PC-3 (cell line): ENCODE measurements at regions of chr18 and their contacts with region 1.

Region 1: GRCh38 chr18:57630002-57630753 is 8.5 kb upstream of the NARS1 start:
- DNase-seq: peak; percentile 88
- ATAC-seq: peak; percentile 86
- H3K4me3 ChIP-seq: peak overlapping the region; percentile 71
- H3K27ac ChIP-seq: peak overlapping the region; percentile 63
- H3K4me1 ChIP-seq: peaks cover 14% of the 10 kb centered on the region
- H3K27me3 ChIP-seq: no peaks in the 10 kb centered on the region
- CTCF ChIP-seq: peak; percentile 77

Region 2: GRCh38 chr18:57281519-57281918 is 348.7 kb before region 1 on chr18:
- CTCF ChIA-PET with region 1: no interaction called
- POLR2A ChIA-PET with region 1: no interaction called
- intact Hi-C with region 1: no loop called
- DNase-seq: no peak
- ATAC-seq: no peak
- H3K4me3 ChIP-seq: no peak overlapping the region
- H3K27ac ChIP-seq: no peak overlapping the region
- H3K4me1 ChIP-seq: no peaks in the 10 kb centered on the region
- H3K27me3 ChIP-seq: peaks cover 44% of the 10 kb centered on the region
- CTCF ChIP-seq: no peak

Region 3: DNA sequence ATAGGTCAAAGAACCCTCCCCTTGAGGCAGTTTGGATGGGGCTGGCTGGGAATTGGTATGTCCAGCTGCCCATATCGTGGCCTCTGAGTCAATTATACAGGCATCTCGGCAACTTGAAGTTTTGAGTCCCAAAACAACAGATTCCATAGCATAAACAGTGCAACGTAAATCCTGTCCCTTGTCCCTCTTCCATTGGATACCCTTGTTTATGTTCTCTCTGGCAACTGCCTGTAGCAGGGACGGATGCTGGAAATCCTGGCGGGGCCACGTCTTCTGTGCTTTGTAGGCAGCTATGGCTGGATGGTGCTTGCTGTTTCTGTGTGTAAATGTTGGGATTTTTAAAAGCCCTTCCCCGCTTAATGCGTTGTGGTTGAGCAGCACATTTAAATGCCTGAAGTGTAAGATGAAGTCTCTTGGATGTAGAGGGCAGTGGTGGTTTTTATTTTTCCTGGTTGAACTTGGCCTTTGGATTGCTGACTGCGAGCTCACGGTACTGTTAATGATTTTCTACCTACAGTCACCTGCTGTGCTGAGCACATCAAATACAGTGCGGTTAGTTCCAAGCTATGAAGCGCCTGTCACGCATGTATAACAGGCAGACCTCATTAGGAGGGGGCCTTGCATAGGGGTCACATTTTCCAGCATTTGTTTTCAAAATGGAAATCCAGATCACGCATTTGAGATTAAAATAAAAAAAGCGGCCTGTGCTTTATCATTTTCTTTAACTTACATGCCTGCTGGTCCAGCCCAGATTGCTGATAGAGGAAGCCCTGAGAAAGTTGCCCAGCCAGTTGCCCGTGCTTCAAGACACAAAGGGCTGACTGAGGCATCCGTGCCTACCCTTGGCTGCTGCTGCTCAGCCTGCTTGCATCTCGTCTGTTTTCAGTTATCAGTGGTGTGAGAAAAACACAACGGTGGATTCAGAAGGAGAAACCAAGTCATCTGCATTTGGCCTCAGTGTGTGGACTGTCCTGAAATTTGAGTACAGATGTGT is 498.5 kb after region 1 on chr18:
- CTCF ChIA-PET with region 1: no interaction called
- POLR2A ChIA-PET with region 1: interaction called, 8 read pairs
- intact Hi-C with region 1: loop called (anchors 10 kb)
- DNase-seq: no peak
- ATAC-seq: no peak
- H3K4me3 ChIP-seq: no peak overlapping the region
- H3K27ac ChIP-seq: no peak overlapping the region
- H3K4me1 ChIP-seq: no peaks in the 10 kb centered on the region
- H3K27me3 ChIP-seq: no peaks in the 10 kb centered on the region
- CTCF ChIP-seq: no peak